Activated CD4-positive, alpha-beta T cell treated with anti-CD3 and anti-CD28 coated beads, Interleukin-2, amount 10 ng/mL, durations not matched to agents 24 days and 14 days (primary cell): ENCODE measurements at regions of chr3 and their contacts with region 1.

Region 1: GRCh38 chr3:169966428-169966950 is at the start of gene SEC62:
- DNase-seq: peak; percentile 98
- H3K4me3 Mint-ChIP-seq: peak within 1 kb of the TSS; percentile 98
- H3K27ac Mint-ChIP-seq: peak within 1 kb of the TSS; percentile 99
- H3K4me1 Mint-ChIP-seq: peaks cover 28% of the 10 kb centered on the region
- H3K27me3 Mint-ChIP-seq: peaks cover 3% of the 10 kb centered on the region
- total RNA-seq, gene SEC62: 72.1 and 72.4 TPM in 2 replicates

Region 2: DNA sequence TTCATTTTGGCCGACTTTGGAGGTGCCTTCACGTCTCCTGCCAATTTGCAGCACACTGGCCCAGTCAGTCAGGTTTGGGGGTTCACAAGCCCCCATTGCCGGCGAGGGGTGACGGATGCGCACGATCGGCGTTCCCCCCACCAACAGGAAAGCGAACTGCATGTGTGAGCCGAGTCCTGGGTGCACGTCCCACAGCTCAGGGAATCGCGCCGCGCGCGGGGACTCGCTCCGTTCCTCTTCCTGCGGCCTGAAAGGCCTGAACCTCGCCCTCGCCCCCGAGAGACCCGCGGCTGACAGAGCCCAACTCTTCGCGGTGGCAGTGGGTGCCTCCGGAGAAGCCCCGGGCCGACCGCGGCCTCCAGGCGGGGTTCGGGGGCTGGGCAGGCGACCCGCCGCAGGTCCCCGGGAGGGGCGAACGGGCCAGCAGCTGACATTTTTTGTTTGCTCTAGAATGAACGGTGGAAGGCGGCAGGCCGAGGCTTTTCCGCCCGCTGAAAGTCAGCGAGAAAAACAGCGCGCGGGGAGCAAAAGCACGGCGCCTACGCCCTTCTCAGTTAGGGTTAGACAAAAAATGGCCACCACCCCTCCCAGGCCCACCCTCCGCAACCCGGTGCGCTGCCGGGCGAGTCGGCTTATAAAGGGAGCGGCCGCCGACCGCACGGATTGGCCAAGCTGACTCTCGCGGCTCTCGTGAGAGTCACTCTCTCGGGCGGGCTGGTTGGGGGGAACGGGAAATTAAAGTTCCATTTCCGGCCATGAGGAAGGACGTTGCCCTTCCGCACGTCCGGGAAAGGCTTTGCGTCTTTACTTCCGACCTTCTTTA is 201.8 kb before region 1 on chr3 and contains the start of gene TERC:
- intact Hi-C with region 1: loop called (anchors 1 kb)
- DNase-seq: peak; percentile 96
- H3K4me3 Mint-ChIP-seq: peak within 1 kb of the TSS; percentile 96
- H3K27ac Mint-ChIP-seq: peak within 1 kb of the TSS; percentile 98
- H3K4me1 Mint-ChIP-seq: peaks cover 19% of the 10 kb centered on the region
- H3K27me3 Mint-ChIP-seq: no peaks in the 10 kb centered on the region
- total RNA-seq, gene TERC: 8.9 TPM in 1 of 2 replicates, not detected in the other

Region 3: DNA sequence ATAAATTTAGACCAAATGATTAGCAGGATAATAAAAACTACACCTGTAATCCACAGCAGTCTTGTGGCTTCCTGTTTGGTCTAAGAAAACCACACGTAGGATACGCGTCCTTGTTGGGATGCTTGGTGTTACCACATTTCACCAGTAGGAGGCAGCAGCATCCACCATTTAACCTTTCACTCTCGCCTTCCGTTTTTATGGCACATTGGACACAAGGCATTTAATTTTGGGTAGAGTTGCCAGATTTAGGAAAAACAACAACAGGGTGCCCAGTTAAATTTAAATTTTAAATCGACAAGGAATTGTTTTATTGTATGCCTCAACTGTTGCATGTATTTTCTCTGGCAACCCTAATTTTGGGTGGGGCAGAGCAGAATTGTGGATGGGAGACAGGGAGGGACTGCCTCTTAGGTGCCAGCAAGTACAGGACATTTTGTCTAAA is 103.0 kb before region 1 on chr3:
- intact Hi-C with region 1: loop called (anchors 1 kb)
- DNase-seq: peak; percentile 90
- H3K4me3 Mint-ChIP-seq: no peak overlapping the region
- H3K27ac Mint-ChIP-seq: no peak overlapping the region
- H3K4me1 Mint-ChIP-seq: peaks cover 16% of the 10 kb centered on the region
- H3K27me3 Mint-ChIP-seq: peaks cover 19% of the 10 kb centered on the region

Region 4: GRCh38 chr3:170037463-170038433 is 71.3 kb after region 1 on chr3 and contains the start of gene GPR160:
- intact Hi-C with region 1: loop called (anchors 2 kb)
- DNase-seq: peak; percentile 95
- H3K4me3 Mint-ChIP-seq: peak within 1 kb of the TSS; percentile 87
- H3K27ac Mint-ChIP-seq: no peak within 1 kb of the TSS
- H3K4me1 Mint-ChIP-seq: peaks cover 16% of the 10 kb centered on the region
- H3K27me3 Mint-ChIP-seq: peaks cover 6% of the 10 kb centered on the region
- total RNA-seq, gene GPR160: 3.4 and 3.6 TPM in 2 replicates

Region 5: GRCh38 chr3:170869645-170870593 is 903.4 kb after region 1 on chr3 and contains the start of gene RPL22L1:
- intact Hi-C with region 1: loop called (anchors 10 kb)
- DNase-seq: peak; percentile 98
- H3K4me3 Mint-ChIP-seq: peak within 1 kb of the TSS; percentile 92
- H3K27ac Mint-ChIP-seq: peak within 1 kb of the TSS; percentile 96
- H3K4me1 Mint-ChIP-seq: peaks cover 18% of the 10 kb centered on the region
- H3K27me3 Mint-ChIP-seq: no peaks in the 10 kb centered on the region
- total RNA-seq, gene RPL22L1: 157 TPM in 2 replicates